A673 (cell line): ENCODE measurements at regions of chr15 and their contacts with region 1.

Region 1: DNA sequence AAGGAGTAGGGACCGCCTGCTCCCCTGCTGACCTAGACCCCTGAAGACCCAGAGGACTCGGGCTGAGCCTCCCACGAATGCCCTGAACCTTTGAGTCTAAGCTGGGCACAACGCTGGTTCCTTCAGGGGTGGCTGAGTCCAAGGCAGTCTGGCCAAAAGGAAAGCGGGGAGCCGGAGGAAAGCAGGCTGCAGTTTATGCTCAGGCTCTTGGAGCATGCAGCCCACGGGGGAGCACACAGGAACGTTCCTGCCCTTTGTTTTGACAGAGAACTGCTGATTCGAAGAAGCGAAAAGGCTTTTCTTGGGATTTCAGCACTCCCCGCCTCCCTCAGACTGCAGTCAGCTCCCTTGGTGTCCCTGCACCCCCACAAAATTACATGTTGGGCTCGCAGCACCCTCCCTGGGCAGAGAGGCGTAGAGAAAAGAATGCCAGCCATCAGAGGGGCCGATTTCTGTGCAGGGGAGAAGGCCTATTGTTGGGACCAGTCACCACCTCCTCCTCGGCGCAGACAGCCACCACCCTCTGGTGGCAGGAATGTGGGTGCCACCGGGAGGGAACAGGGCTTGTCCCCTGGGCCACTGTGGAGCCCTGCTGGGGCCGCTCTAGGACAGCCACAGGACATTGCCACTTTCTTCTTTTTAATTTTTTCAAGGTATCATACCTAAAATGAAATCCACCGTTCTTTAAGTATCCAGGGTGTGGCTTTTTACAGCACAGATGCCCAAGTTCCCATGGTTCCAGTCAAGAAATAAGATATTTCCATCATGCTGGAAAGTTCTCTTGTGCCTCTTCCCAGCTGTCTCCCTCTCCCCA is 72.2 kb downstream of the SMAD6 start:
- DNase-seq: peak; percentile 93
- H3K4me3 ChIP-seq: no peak overlapping the region
- H3K27ac ChIP-seq: peak overlapping the region; percentile 78
- H3K4me1 ChIP-seq: peaks cover 55% of the 10 kb centered on the region
- H3K27me3 ChIP-seq: no peaks in the 10 kb centered on the region
- CTCF ChIP-seq: peak; percentile 97

Region 2: DNA sequence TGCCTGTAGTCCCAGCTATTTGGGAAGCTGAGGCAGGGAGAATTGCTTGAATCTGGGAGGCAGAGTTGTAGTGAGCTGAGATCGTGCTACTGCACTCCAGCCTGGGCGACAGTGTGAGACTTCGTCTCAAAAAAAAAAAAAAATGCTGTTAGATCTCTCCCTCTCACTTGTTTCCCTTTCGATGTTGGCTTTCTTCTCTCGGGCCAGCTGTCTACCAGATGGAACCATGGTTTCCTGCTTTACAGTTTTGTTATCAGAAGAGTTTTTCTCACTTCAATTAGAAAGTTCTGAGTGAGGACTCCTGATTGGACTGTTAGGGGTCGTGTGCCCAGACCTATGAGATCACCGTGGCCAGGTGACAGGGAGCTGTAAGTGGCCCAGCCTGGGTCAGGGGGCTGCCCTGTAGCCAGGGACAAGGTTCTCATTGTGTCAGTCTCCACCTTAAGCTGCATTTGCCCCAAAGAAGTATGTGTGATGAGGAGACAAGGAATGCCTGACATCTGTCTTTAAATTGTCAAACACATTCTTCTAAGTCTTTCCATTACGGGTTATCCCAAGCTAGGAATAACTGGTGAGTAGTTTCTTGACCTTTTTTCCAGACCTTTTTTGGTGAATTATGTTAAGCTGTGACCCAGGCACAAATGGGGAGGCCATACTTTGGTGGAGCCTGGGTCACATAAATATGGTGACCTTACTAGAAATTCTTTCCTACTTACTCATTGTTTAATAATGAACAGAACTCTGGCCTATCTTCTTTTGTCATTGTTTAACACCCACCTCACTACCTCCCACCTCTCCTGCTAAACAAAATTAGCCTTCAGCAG is 301.8 kb before region 1 on chr15:
- CTCF ChIA-PET with region 1: interaction called, 15 read pairs
- POLR2A ChIA-PET with region 1: no interaction called
- intact Hi-C with region 1: no loop called
- DNase-seq: no peak
- H3K4me3 ChIP-seq: no peak overlapping the region
- H3K27ac ChIP-seq: no peak overlapping the region
- H3K4me1 ChIP-seq: no peaks in the 10 kb centered on the region
- H3K27me3 ChIP-seq: no peaks in the 10 kb centered on the region
- CTCF ChIP-seq: no peak

Region 3: DNA sequence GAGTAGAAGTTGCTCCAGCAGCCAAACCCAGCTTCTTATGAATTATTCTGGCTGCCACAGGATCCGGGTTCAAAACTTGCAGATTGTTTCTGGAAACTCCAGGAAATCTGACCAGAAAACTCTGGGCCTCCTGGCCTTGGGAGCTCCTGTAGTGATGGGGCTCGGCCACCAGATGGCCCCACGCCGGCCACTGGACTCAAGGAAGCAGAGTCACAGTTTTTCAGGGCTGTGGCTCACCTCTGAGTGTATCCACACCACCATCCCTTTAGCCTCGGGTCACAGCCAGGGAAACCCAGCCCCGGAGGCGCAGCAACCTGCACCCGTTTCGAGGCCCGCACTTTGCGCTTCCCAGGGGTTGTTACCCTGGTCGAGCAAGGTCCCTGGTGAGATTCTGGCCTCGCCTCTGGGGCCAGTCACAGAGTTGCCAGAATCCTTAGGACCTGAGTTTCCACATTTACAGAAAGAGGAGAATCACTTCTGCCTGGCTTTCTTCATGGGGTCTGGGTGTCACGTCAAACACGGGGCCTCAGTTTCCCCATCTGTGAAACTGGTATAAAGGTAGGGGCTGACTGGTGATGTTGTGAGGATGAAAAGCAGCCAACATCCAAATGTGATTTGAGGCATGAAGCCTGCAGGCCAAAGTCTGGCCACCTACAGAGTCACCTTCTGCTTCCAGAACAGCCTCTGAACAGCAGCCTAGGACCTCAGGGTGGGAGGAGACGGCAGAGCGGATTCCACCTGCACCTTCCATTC is 154.9 kb before region 1 on chr15:
- CTCF ChIA-PET with region 1: interaction called, 4 read pairs
- POLR2A ChIA-PET with region 1: no interaction called
- intact Hi-C with region 1: loop called (anchors 1 kb)
- DNase-seq: peak; percentile 69
- H3K4me3 ChIP-seq: no peak overlapping the region
- H3K27ac ChIP-seq: no peak overlapping the region
- H3K4me1 ChIP-seq: peaks cover 31% of the 10 kb centered on the region
- H3K27me3 ChIP-seq: no peaks in the 10 kb centered on the region
- CTCF ChIP-seq: peak; percentile 84

Region 4: DNA sequence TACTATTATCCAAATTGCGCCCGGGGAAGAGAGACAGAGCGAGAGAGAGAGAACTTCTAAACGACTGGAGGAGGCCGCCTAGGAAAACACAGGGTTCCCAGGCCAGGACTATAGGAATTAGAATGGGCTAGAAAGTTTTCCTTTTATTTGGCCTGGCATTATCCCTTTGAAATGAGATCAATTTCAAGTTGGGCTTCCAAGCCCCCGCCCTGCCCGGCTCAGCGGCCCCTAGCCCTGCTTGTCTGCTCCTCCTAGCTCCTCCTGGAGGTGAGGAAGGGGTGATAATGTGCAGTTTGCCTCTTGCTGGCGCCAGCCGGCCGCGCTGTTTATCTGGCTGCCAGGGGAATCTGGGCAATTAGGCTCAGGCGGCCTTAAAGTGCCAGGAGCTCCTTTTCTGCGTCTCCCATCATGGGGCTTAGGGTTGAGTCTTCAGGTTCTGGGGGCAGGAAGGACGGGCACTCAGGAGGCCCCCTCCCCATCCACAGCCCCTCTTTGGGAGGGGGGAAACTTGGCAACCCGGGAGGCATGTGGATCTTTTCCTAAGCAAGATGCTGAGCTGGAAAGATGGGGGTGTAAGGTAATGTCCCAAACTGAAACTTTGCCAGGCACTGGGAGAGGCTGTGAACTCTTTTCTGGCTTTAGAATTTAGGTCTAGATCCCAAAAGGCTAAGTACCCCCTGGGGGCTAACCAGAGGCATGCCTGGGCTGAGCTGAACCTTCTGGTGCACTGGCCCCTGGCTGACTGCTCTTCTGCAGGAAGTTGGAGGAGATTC is 66.7 kb before region 1 on chr15:
- CTCF ChIA-PET with region 1: interaction called, 4 read pairs
- POLR2A ChIA-PET with region 1: no interaction called
- intact Hi-C with region 1: loop called (anchors 2 kb)
- DNase-seq: peak; percentile 86
- H3K4me3 ChIP-seq: peak overlapping the region; percentile 63
- H3K27ac ChIP-seq: peak overlapping the region; percentile 75
- H3K4me1 ChIP-seq: peaks cover 55% of the 10 kb centered on the region
- H3K27me3 ChIP-seq: no peaks in the 10 kb centered on the region
- CTCF ChIP-seq: peak; percentile 45